ENCODE measurements at regions of chr14 and their contacts with region 1.

Region 1: DNA sequence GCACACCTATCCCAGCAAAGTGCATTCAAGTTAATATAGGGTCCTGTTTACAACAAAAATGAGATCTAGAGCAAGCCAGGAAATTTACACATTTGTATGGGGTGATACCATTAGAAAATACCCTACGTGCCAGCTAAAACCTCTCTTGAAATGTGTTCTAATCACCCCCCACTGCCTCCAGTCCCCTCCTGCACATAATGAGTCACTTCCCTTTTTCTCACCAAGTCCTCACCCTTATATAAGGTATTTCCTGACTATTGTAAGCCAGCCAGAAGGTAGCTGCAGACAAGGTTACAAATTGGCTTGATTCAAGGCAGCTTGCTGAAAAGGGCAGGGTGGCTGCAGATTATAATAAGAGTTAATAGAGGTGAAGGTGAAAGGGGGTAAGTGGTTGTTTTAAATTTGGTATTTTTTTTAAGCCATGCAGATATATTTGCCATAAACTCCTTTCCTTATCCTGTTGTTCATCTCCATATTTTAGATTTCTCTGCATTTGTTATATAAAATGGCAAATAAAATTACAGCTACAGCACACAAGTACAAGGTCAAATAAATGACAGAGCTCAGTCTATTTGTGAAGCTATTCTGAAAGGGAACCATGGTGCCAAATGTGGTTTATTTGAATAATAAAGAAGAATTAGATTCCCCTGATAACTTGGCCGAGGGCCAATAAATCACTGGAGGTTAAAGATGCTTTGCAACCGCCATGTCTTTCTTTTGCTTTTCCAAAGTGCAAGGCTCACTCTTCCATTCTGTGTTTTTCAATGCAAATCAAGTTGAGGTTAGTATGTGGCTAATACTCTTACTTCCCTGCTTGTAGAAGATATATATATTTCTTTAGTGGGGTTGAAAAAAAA is 385.9 kb downstream of the EGLN3 start:
- DNase-seq: peak; percentile 98
- H3K4me3 ChIP-seq: peak overlapping the region in 1 of 3 experiments; percentile 16
- H3K27ac ChIP-seq: peak overlapping the region; percentile 100
- H3K4me1 ChIP-seq: peaks cover 69% of the 10 kb centered on the region
- H3K27me3 ChIP-seq: no peaks in the 10 kb centered on the region
- CTCF ChIP-seq: no peak
- POLR2A ChIP-seq: peak; percentile 19

Region 2: DNA sequence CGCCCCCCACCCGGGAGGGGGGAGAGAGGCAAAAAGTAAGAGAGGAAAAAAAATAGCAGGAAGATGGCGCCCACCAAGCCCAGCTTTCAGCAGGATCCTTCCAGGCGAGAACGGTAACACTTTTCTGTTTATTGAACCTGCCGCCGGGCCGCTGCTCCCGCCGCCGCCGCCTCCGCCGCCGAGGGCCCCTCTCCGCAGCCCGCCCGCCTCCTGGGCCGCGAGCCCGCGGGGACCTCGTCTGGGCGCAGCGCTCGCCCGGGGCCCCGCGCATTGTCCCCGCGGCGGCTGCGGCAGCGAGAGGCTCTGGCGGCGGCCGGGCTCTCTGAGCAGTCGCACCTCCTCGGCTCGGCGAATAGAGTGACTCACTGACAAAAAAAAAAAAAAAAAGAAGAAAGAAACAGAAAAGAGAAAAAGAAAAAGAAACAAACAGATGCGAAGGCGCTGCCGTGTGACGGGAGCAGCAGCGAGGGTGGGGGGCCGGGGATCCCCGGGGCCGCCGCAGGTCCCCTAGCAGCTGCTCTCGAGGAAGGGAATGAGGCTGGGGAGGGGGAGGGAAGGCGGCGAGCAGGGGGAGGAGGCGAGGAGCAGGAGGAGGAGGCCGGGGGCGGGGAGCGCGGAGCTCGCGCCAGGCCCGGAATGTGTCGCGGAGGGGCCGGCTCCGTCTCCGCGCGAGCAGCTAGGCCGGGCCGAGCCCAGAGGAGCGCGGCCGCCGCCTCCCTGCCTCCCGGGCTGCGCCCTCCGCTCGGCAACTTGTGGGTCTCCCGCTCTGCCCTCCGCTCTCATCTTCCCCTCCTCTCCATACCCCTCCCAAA is 625.5 kb before region 1 on chr14:
- CTCF ChIA-PET with region 1: no interaction called
- POLR2A ChIA-PET with region 1: no interaction called
- dilution Hi-C with region 1: no loop called
- intact Hi-C with region 1: loop called (anchors 10 kb)
- DNase-seq: peak; percentile 68
- H3K4me3 ChIP-seq: peak overlapping the region; percentile 20 to 56 (median 56)
- H3K27ac ChIP-seq: peak overlapping the region; percentile 44
- H3K4me1 ChIP-seq: peaks cover 8% of the 10 kb centered on the region
- H3K27me3 ChIP-seq: peaks cover 31 to 46% of the 10 kb centered on the region in 2 experiments
- CTCF ChIP-seq: no peak
- POLR2A ChIP-seq: no peak

Region 3: GRCh38 chr14:33524244-33524643 is 40.8 kb before region 1 on chr14:
- CTCF ChIA-PET with region 1: interaction called, 3 read pairs
- POLR2A ChIA-PET with region 1: interaction called, 3 read pairs
- dilution Hi-C with region 1: no loop called
- intact Hi-C with region 1: loop called (anchors 1 kb)
- DNase-seq: no peak
- H3K4me3 ChIP-seq: no peak overlapping the region
- H3K27ac ChIP-seq: no peak overlapping the region
- H3K4me1 ChIP-seq: peaks cover 26% of the 10 kb centered on the region
- H3K27me3 ChIP-seq: no peaks in the 10 kb centered on the region
- CTCF ChIP-seq: no peak
- POLR2A ChIP-seq: no peak

Region 4: DNA sequence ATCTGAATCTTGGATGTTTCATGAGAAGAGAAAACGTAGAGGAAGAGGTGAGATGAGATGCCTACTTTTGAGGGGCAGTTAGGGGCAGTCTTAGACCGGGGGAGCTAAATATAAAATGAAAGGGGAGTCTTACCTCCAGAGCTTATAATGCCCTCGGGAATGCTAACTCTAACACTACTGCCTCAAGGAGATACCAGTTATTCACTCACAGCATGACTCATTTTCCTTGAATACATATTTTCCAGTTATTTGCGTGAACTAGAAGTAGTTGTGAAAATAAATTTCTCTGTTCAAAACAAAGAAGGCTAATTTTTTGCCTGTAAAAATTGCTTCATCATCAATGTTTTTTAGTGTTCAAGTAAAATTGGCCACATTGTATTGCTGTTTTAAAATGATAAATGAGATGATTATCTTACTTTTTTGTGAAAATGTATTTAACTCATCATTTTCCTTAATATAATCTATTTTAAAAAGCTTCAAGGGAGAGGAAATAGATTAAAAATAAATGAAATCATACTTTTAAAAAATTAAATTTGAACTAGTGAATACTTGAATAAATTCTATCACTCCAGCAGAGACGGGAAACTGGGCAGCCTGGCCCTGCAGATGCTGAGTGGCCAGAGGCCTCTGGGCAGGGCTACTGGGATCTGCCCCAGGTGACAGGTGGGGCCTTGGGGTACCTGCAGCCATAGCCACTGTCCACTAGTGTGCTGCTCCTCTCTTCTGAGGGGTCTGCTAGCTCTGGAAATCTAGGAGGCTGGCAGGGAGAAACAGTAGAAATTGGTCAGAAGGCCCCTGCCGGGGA is 46.6 kb after region 1 on chr14:
- CTCF ChIA-PET with region 1: interaction called, 5 read pairs
- POLR2A ChIA-PET with region 1: no interaction called
- dilution Hi-C with region 1: no loop called
- intact Hi-C with region 1: loop called (anchors 2 kb)
- DNase-seq: peak; percentile 78
- H3K4me3 ChIP-seq: no peak overlapping the region
- H3K27ac ChIP-seq: peak overlapping the region; percentile 36
- H3K4me1 ChIP-seq: peaks cover 8% of the 10 kb centered on the region
- H3K27me3 ChIP-seq: no peaks in the 10 kb centered on the region
- CTCF ChIP-seq: no peak
- POLR2A ChIP-seq: no peak

Region 5: DNA sequence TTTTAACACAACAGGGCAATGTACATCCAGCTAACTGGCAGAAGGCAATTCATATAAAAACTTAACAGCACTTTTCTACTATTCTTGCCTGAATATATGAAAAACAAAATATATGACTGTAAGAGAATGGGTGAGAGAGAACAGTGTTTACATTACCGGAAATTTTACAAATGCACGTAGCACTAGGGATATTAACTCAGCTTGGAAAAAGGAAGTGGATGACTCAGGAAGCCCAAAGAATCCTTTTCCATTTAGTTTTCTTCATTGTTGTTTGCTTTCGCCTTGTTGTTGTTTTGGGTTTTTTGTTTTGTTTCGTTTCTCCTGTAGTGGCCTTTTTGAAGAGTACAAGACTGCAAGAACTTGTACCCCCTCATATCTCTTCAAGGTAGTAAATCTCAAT is 90.4 kb after region 1 on chr14:
- CTCF ChIA-PET with region 1: interaction called, 3 read pairs
- POLR2A ChIA-PET with region 1: no interaction called
- dilution Hi-C with region 1: no loop called
- intact Hi-C with region 1: loop called (anchors 1 kb)
- DNase-seq: peak; percentile 83
- H3K4me3 ChIP-seq: peak overlapping the region in 1 of 3 experiments; percentile 31
- H3K27ac ChIP-seq: peak overlapping the region; percentile 76
- H3K4me1 ChIP-seq: peaks cover 34% of the 10 kb centered on the region
- H3K27me3 ChIP-seq: no peaks in the 10 kb centered on the region
- CTCF ChIP-seq: no peak
- POLR2A ChIP-seq: no peak

Region 6: GRCh38 chr14:33764876-33765650 is 200.1 kb after region 1 on chr14:
- CTCF ChIA-PET with region 1: interaction called, 3 read pairs
- POLR2A ChIA-PET with region 1: no interaction called
- dilution Hi-C with region 1: no loop called
- intact Hi-C with region 1: loop called (anchors 2 kb)
- DNase-seq: peak; percentile 64
- H3K4me3 ChIP-seq: no peak overlapping the region
- H3K27ac ChIP-seq: no peak overlapping the region
- H3K4me1 ChIP-seq: peaks cover 36% of the 10 kb centered on the region
- H3K27me3 ChIP-seq: no peaks in the 10 kb centered on the region
- CTCF ChIP-seq: no peak
- POLR2A ChIP-seq: no peak